ENCODE measurements at regions of chr13 and their contacts with region 1.

Region 1: GRCh38 chr13:99436686-99437416 is 64.4 kb upstream of the TM9SF2 start:
- DNase-seq: peak; percentile 98
- ATAC-seq: peak; percentile 30
- H3K4me3 Mint-ChIP-seq: peak overlapping the region; percentile 0
- H3K27ac Mint-ChIP-seq: peak overlapping the region; percentile 45
- H3K4me1 Mint-ChIP-seq: peaks cover 60% of the 10 kb centered on the region
- H3K27me3 Mint-ChIP-seq: peaks cover 2% of the 10 kb centered on the region

Region 2: GRCh38 chr13:99033814-99034213 is 403.0 kb before region 1 on chr13:
- CTCF ChIA-PET with region 1: no interaction called
- POLR2A ChIA-PET with region 1: no interaction called
- intact Hi-C with region 1: loop called in 1 of 2 experiments (anchors 10 kb)
- DNase-seq: no peak
- ATAC-seq: peak; percentile 56
- H3K4me3 Mint-ChIP-seq: no peak overlapping the region
- H3K27ac Mint-ChIP-seq: no peak overlapping the region
- H3K4me1 Mint-ChIP-seq: peaks cover 51% of the 10 kb centered on the region
- H3K27me3 Mint-ChIP-seq: no peaks in the 10 kb centered on the region

Region 3: DNA sequence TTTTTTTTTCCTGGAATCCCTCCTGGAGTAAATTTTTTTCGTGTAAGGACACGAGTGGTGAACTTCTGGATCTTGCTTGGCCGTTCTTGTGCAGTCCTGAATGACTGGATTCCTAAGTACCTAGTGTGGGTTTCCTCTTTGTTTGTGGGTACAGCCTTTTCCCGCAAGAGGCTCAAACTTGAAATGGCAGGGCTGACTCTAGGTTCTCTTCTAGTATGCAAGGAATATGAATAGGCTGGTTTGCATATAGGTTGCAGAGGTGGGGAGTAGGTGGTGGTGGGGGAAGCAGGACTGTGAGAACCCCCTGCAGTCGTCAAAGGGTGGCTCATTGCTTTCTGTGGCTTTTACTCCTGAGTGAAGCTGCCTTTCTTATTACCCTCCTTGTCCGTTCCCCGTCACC is 222.6 kb before region 1 on chr13:
- CTCF ChIA-PET with region 1: interaction called, 7 read pairs
- POLR2A ChIA-PET with region 1: interaction called, 4 read pairs
- intact Hi-C with region 1: loop called (anchors 1 to 5 kb)
- DNase-seq: peak; percentile 82
- ATAC-seq: peak; percentile 80
- H3K4me3 Mint-ChIP-seq: peak overlapping the region; percentile 74
- H3K27ac Mint-ChIP-seq: peak overlapping the region; percentile 87
- H3K4me1 Mint-ChIP-seq: peaks cover 79% of the 10 kb centered on the region
- H3K27me3 Mint-ChIP-seq: no peaks in the 10 kb centered on the region

Region 4: GRCh38 chr13:99307648-99308339 is 129.1 kb before region 1 on chr13:
- CTCF ChIA-PET with region 1: interaction called, 32 read pairs
- POLR2A ChIA-PET with region 1: interaction called, 23 read pairs
- intact Hi-C with region 1: loop called (anchors 1 kb)
- DNase-seq: peak; percentile 88
- ATAC-seq: peak; percentile 82
- H3K4me3 Mint-ChIP-seq: peak overlapping the region; percentile 85
- H3K27ac Mint-ChIP-seq: peak overlapping the region; percentile 98
- H3K4me1 Mint-ChIP-seq: peaks cover 73% of the 10 kb centered on the region
- H3K27me3 Mint-ChIP-seq: no peaks in the 10 kb centered on the region

Region 5: GRCh38 chr13:99380921-99381645 is 55.8 kb before region 1 on chr13:
- CTCF ChIA-PET with region 1: interaction called, 131 read pairs
- POLR2A ChIA-PET with region 1: interaction called, 6 read pairs
- intact Hi-C with region 1: loop called in 1 of 2 experiments (anchors 1 kb)
- DNase-seq: peak; percentile 89
- ATAC-seq: peak; percentile 78
- H3K4me3 Mint-ChIP-seq: no peak overlapping the region
- H3K27ac Mint-ChIP-seq: peak overlapping the region; percentile 96
- H3K4me1 Mint-ChIP-seq: peaks cover 89% of the 10 kb centered on the region
- H3K27me3 Mint-ChIP-seq: no peaks in the 10 kb centered on the region

Region 6: GRCh38 chr13:99501184-99501847 is 64.5 kb after region 1 on chr13 and contains the start of gene TM9SF2:
- CTCF ChIA-PET with region 1: interaction called, 32 read pairs
- POLR2A ChIA-PET with region 1: interaction called, 3 read pairs
- intact Hi-C with region 1: loop called (anchors 1 kb)
- DNase-seq: peak; percentile 97
- ATAC-seq: peak; percentile 69
- H3K4me3 Mint-ChIP-seq: peak within 1 kb of the TSS; percentile 96
- H3K27ac Mint-ChIP-seq: peak within 1 kb of the TSS; percentile 97
- H3K4me1 Mint-ChIP-seq: peaks cover 68% of the 10 kb centered on the region
- H3K27me3 Mint-ChIP-seq: no peaks in the 10 kb centered on the region
- total RNA-seq, gene TM9SF2: 51.8 to 53.4 TPM